ENCODE measurements at regions of chr4 and their contacts with region 1.

Region 1: DNA sequence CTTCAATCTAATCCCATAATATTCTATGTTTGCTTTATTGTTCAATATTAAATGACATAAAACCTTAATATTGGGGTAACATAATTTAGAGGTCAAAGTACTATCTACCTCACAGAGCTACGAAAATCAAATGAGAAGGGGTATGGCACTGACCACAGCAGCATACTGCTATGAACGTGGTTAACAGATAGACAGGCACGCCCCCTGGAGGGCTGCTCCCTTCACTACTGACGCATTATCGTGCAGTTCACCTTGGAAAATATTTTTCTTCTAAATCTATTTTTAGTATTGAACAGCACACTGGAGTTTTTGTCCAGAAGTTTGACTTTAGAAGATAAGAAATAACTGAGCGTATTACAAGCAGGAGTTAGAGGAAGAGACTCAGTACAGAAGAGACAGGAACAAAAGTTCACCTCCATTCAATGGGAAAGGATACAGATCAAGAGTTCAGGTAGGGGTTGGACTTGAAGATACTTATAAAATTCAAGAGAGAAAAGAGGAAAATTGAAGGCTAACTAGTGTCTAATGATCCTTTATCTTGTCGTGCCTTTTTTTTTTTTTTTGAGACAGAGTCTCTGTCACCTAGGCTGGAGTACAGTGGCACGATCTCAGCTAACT is 22.7 kb downstream of the MAP9 start:
- DNase-seq: peak; percentile 43 to 73 (median 52)
- ATAC-seq: peak; percentile 76 to 92 (median 81)
- H3K4me3 ChIP-seq: no peak overlapping the region
- H3K27ac ChIP-seq: no peak overlapping the region
- H3K4me1 ChIP-seq: peaks cover 0 to 5% (median 0%) of the 10 kb centered on the region in 12 donors
- H3K27me3 ChIP-seq: no peaks in the 10 kb centered on the region
- CTCF ChIP-seq: peak; percentile 47 to 79 (median 66)
- POLR2A ChIP-seq: no peak

Region 2: GRCh38 chr4:154807042-154807630 is 546.9 kb before region 1 on chr4:
- intact Hi-C with region 1: loop called in 6 of 10 experiments (anchors 2 to 10 kb)
- DNase-seq: no peak
- ATAC-seq: no peak
- H3K4me3 ChIP-seq: peak overlapping the region in 1 of 12 donors; percentile 7
- H3K27ac ChIP-seq: no peak overlapping the region
- H3K4me1 ChIP-seq: no peaks in the 10 kb centered on the region
- H3K27me3 ChIP-seq: peaks cover 0 to 8% (median 0%) of the 10 kb centered on the region in 9 donors
- CTCF ChIP-seq: peak; percentile 33 to 67 (median 50)
- POLR2A ChIP-seq: no peak

Region 3: DNA sequence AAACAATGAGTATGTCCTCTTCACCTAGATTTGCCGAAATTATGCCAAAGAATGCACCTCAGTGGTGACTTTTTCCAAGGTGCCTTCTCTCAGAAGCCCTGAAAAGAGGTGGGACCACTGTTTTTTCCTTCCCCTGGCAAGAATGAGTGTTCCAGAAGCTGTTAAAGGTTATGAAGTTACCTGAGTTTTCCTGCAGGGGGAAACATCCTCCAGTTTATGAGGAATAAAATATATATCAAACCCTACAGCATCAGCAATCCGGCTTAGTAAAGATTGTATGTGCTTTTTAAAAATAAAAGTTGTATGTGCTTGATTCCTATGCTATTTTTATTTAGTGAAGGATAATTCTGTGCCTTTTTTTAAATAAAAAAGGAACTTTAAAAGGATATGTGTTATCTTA is 499.7 kb before region 1 on chr4:
- intact Hi-C with region 1: loop called in 1 of 10 experiments (anchors 5 kb)
- DNase-seq: no peak
- ATAC-seq: no peak
- H3K4me3 ChIP-seq: no peak overlapping the region
- H3K27ac ChIP-seq: no peak overlapping the region
- H3K4me1 ChIP-seq: no peaks in the 10 kb centered on the region
- H3K27me3 ChIP-seq: no peaks in the 10 kb centered on the region
- CTCF ChIP-seq: peak in 3 of 12 donors; percentile 5 to 19 (median 11)
- POLR2A ChIP-seq: no peak

Region 4: GRCh38 chr4:154977228-154977627 is 376.8 kb before region 1 on chr4:
- intact Hi-C with region 1: loop called in 9 of 10 experiments (anchors 5 to 10 kb)
- DNase-seq: no peak
- ATAC-seq: no peak
- H3K4me3 ChIP-seq: no peak overlapping the region
- H3K27ac ChIP-seq: no peak overlapping the region
- H3K4me1 ChIP-seq: no peaks in the 10 kb centered on the region
- H3K27me3 ChIP-seq: peaks cover 0 to 3% (median 0%) of the 10 kb centered on the region in 9 donors
- CTCF ChIP-seq: no peak
- POLR2A ChIP-seq: no peak

Region 5: GRCh38 chr4:154982187-154983047 is 371.6 kb before region 1 on chr4:
- intact Hi-C with region 1: loop called in 9 of 10 experiments (anchors 5 to 10 kb)
- DNase-seq: peak; percentile 16 to 65 (median 31)
- ATAC-seq: peak in 1 of 4 donors; percentile 45
- H3K4me3 ChIP-seq: no peak overlapping the region
- H3K27ac ChIP-seq: no peak overlapping the region
- H3K4me1 ChIP-seq: no peaks in the 10 kb centered on the region
- H3K27me3 ChIP-seq: peaks cover 0 to 4% (median 0%) of the 10 kb centered on the region in 9 donors
- CTCF ChIP-seq: peak; percentile 38 to 59 (median 50)
- POLR2A ChIP-seq: no peak

Region 6: DNA sequence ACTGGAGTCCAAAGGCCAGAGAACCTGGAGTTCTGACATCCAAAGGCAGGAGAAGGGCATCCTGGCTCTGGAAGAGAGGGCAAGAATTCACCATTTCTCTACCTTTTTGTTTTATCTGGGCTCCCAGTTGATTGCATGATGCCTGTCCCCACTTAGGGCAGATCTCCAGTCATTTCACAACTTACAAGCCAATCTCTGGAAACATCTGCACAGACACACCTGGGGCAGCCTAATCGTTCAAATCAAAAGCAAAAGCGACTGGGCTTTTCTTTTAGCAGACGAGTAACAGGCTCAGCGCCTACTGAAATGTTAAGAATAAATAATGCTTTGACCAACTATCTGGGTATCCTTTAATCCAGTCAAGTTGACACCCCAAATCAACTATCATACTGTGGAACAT is 281.6 kb before region 1 on chr4:
- intact Hi-C with region 1: no loop called
- DNase-seq: no peak
- ATAC-seq: no peak
- H3K4me3 ChIP-seq: no peak overlapping the region
- H3K27ac ChIP-seq: no peak overlapping the region
- H3K4me1 ChIP-seq: no peaks in the 10 kb centered on the region
- H3K27me3 ChIP-seq: no peaks in the 10 kb centered on the region
- CTCF ChIP-seq: no peak
- POLR2A ChIP-seq: no peak

Region 7: GRCh38 chr4:155478336-155478825 is 124.3 kb after region 1 on chr4:
- intact Hi-C with region 1: no loop called
- DNase-seq: no peak
- ATAC-seq: no peak
- H3K4me3 ChIP-seq: no peak overlapping the region
- H3K27ac ChIP-seq: peak overlapping the region in 1 of 12 donors; percentile 1
- H3K4me1 ChIP-seq: peaks cover 0 to 12% (median 0%) of the 10 kb centered on the region in 12 donors
- H3K27me3 ChIP-seq: no peaks in the 10 kb centered on the region
- CTCF ChIP-seq: no peak
- POLR2A ChIP-seq: no peak